PC-3 (cell line): ENCODE measurements at regions of chr11 and their contacts with region 1.

Region 1: DNA sequence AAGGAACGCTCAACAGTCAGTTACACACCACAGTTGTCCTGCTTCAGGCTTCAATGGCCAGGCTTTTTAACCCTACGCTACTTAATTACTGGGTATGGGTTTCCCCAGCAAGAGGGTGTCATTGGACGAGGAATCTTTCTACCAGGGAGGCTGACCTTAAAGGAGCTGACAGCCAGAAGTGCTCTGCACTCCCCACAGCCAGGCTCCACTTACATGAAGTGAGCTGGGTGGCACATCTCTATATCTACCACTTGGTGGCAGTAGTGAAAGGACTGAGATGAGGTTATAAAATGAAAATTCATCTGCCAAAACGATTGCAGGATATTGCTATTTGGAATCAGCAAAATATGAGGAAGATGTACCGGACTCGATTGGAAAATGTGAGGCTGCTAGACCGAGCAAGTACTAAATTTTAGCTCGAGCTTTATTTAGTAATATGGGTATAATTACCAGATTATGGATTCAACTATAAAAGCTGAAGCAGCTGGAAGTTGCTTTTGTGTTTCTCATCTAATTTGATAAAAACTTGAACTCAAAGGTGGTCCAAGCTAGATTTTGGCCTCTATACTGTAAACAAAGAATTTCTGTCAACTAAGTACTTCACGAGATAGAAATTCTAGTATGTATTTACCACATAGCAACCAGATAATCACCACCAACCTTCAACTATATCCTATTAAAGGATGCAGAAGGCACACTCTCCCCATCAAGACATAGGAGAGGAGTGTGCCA is 53.9 kb upstream of the CEP126 start:
- DNase-seq: peak; percentile 90
- ATAC-seq: peak; percentile 79
- H3K4me3 ChIP-seq: no peak overlapping the region
- H3K27ac ChIP-seq: no peak overlapping the region
- H3K4me1 ChIP-seq: peaks cover 31% of the 10 kb centered on the region
- H3K27me3 ChIP-seq: no peaks in the 10 kb centered on the region
- CTCF ChIP-seq: peak; percentile 91

Region 2: DNA sequence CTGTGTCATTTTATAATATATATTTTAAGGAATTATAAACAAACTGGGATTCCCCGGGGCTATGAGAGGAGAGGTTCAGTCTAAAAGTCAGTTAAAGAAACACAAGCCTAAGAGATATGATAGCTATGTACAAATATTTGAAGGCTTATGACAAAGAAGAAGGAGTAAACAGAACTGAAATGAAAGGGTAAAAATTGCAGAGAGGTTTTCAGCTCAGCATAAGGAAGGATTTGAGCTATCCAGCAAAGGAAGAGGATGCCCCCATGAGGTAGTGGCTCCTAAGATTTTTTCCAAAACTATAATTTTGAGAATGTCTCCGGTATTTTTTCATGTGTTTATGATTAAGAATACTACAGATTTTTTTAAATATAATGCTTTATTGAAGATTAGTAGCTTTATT is 113.4 kb after region 1 on chr11:
- CTCF ChIA-PET with region 1: interaction called, 16 read pairs
- POLR2A ChIA-PET with region 1: no interaction called
- intact Hi-C with region 1: loop called (anchors 1 kb)
- DNase-seq: peak; percentile 52
- ATAC-seq: peak; percentile 97
- H3K4me3 ChIP-seq: no peak overlapping the region
- H3K27ac ChIP-seq: no peak overlapping the region
- H3K4me1 ChIP-seq: 0 out of 2 replicates have a peak, but pooled peaks cover 5% of the 10 kb centered on the region
- H3K27me3 ChIP-seq: no peaks in the 10 kb centered on the region
- CTCF ChIP-seq: peak; percentile 61

Region 3: GRCh38 chr11:102097186-102097585 is 236.3 kb after region 1 on chr11:
- CTCF ChIA-PET with region 1: no interaction called
- POLR2A ChIA-PET with region 1: no interaction called
- intact Hi-C with region 1: no loop called
- DNase-seq: no peak
- ATAC-seq: no peak
- H3K4me3 ChIP-seq: no peak overlapping the region
- H3K27ac ChIP-seq: no peak overlapping the region
- H3K4me1 ChIP-seq: no peaks in the 10 kb centered on the region
- H3K27me3 ChIP-seq: no peaks in the 10 kb centered on the region
- CTCF ChIP-seq: no peak

Region 4: GRCh38 chr11:102177974-102178631 is 317.2 kb after region 1 on chr11:
- CTCF ChIA-PET with region 1: no interaction called
- POLR2A ChIA-PET with region 1: no interaction called
- intact Hi-C with region 1: loop called (anchors 5 kb)
- DNase-seq: peak; percentile 99
- ATAC-seq: peak; percentile 90
- H3K4me3 ChIP-seq: peak overlapping the region; percentile 26; the same call in 1 of the 2 replicates
- H3K27ac ChIP-seq: peak overlapping the region; percentile 80
- H3K4me1 ChIP-seq: peaks cover 27% of the 10 kb centered on the region
- H3K27me3 ChIP-seq: no peaks in the 10 kb centered on the region
- CTCF ChIP-seq: no peak

Region 5: GRCh38 chr11:102287964-102288724 is 427.3 kb after region 1 on chr11:
- CTCF ChIA-PET with region 1: no interaction called
- POLR2A ChIA-PET with region 1: no interaction called
- intact Hi-C with region 1: loop called (anchors 5 kb)
- DNase-seq: peak; percentile 96
- ATAC-seq: peak; percentile 70
- H3K4me3 ChIP-seq: peak overlapping the region; percentile 52
- H3K27ac ChIP-seq: peak overlapping the region; percentile 13
- H3K4me1 ChIP-seq: peaks cover 40% of the 10 kb centered on the region
- H3K27me3 ChIP-seq: no peaks in the 10 kb centered on the region
- CTCF ChIP-seq: peak; percentile 93